CD4-positive, alpha-beta memory T cell (primary cell): ENCODE measurements at regions of chr2 and their contacts with region 1.

Region 1: GRCh38 chr2:177148477-177149154 is 64.0 kb upstream of the HNRNPA3 start:
- DNase-seq: peak; percentile 66 to 76 (median 71)
- H3K4me3 ChIP-seq: peak overlapping the region; percentile 53 to 73
- H3K4me3 Mint-ChIP-seq: peak overlapping the region; percentile 85 to 94 (median 90)
- H3K27ac ChIP-seq: peak overlapping the region; percentile 19
- H3K27ac Mint-ChIP-seq: peak overlapping the region in 6 of 7 donors; percentile 31 to 83 (median 58)
- H3K4me1 ChIP-seq: peaks cover 11% of the 10 kb centered on the region
- H3K4me1 Mint-ChIP-seq: peaks cover 6 to 12% (median 12%) of the 10 kb centered on the region in 4 donors
- H3K27me3 ChIP-seq: peaks cover 15% of the 10 kb centered on the region
- H3K27me3 Mint-ChIP-seq: peaks cover 14 to 19% of the 10 kb centered on the region in 2 donors

Region 2: GRCh38 chr2:176001916-176002687 is 1146.5 kb before region 1 on chr2 and contains the start of gene LNPK:
- CTCF ChIA-PET with region 1: no interaction called
- POLR2A ChIA-PET with region 1: no interaction called
- intact Hi-C with region 1: loop called (anchors 5 kb)
- DNase-seq: peak; percentile 88 to 95 (median 92)
- H3K4me3 ChIP-seq: peak within 1 kb of the TSS; percentile 76 to 77
- H3K4me3 Mint-ChIP-seq: peak within 1 kb of the TSS; percentile 81 to 94 (median 90)
- H3K27ac ChIP-seq: peak within 1 kb of the TSS; percentile 74
- H3K27ac Mint-ChIP-seq: peak within 1 kb of the TSS; percentile 61 to 98 (median 91)
- H3K4me1 ChIP-seq: peaks cover 16% of the 10 kb centered on the region
- H3K4me1 Mint-ChIP-seq: peaks cover 12 to 33% (median 17%) of the 10 kb centered on the region in 4 donors
- H3K27me3 ChIP-seq: no peaks in the 10 kb centered on the region
- H3K27me3 Mint-ChIP-seq: no peaks in the 10 kb centered on the region
- total RNA-seq, gene LNPK: 30.4 to 31.3 TPM

Region 3: GRCh38 chr2:176132205-176133171 is 1016.1 kb before region 1 on chr2:
- CTCF ChIA-PET with region 1: interaction called, 30 read pairs
- POLR2A ChIA-PET with region 1: no interaction called
- intact Hi-C with region 1: loop called (anchors 1 kb)
- DNase-seq: peak in 2 of 5 donors; percentile 34 to 38
- H3K4me3 ChIP-seq: peak overlapping the region; percentile 25 to 38
- H3K4me3 Mint-ChIP-seq: peak overlapping the region; percentile 78 to 89 (median 86)
- H3K27ac ChIP-seq: no peak overlapping the region
- H3K27ac Mint-ChIP-seq: peak overlapping the region in 3 of 7 donors; percentile 30 to 83 (median 52)
- H3K4me1 ChIP-seq: peaks cover 49% of the 10 kb centered on the region
- H3K4me1 Mint-ChIP-seq: peaks cover 21 to 58% (median 40%) of the 10 kb centered on the region in 4 donors
- H3K27me3 ChIP-seq: peaks cover 87% of the 10 kb centered on the region
- H3K27me3 Mint-ChIP-seq: peaks cover 64 to 72% of the 10 kb centered on the region in 2 donors

Region 4: DNA sequence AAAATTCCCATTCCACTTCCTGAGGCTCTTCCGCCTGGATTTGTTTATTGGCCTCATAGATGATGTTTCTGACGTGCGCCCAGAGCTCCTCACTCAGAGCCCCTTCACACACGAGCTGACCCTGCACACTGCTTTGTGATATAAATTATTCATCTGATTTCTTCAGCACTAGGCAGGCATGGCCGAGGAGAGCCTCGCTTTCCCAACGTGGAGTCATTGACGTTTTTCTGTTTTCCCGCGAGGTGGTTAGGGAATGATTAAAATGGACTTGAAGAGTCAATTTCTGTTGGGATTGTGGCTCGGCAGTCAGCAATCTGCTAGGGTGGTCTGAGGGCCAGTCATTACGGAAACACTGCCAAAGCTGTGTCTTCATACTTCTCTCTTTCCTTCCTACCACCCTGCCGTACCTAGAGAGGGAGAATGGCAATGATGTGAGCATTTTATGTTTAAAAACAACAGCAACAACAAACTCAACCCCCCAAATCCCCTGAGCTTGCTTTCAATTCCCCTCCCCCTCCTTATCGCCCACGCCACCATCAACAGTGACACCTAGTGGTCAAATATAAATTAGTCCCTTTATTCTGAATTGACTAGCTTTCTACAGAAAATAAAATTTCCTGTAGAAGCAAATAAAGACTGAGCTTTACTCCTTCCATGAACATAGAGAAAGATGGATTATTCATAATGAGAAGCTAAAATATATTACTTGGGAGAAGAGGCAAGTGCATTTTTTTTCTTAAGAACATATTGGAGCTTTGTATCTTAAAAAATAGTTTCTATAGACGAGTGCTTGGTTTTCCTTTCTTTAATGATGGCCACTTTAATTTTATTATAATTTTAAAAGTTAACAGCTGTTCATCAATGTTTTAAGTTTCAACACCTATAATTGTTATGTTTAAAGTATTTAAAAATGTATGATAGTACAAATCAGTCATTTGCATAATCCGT is 594.2 kb before region 1 on chr2:
- CTCF ChIA-PET with region 1: interaction called, 6 read pairs
- POLR2A ChIA-PET with region 1: no interaction called
- intact Hi-C with region 1: loop called (anchors 10 kb)
- DNase-seq: peak in 4 of 5 donors; percentile 42 to 48 (median 45)
- H3K4me3 ChIP-seq: peak overlapping the region; percentile 21 to 33
- H3K4me3 Mint-ChIP-seq: peak overlapping the region; percentile 82 to 94 (median 88)
- H3K27ac ChIP-seq: no peak overlapping the region
- H3K27ac Mint-ChIP-seq: no peak overlapping the region
- H3K4me1 ChIP-seq: peaks cover 10% of the 10 kb centered on the region
- H3K4me1 Mint-ChIP-seq: peaks cover 6 to 13% (median 10%) of the 10 kb centered on the region in 4 donors
- H3K27me3 ChIP-seq: peaks cover 3% of the 10 kb centered on the region
- H3K27me3 Mint-ChIP-seq: peaks cover 20 to 28% of the 10 kb centered on the region in 2 donors

Region 5: GRCh38 chr2:176653479-176654443 is 494.9 kb before region 1 on chr2:
- CTCF ChIA-PET with region 1: interaction called, 20 read pairs
- POLR2A ChIA-PET with region 1: no interaction called
- intact Hi-C with region 1: loop called (anchors 1 kb)
- DNase-seq: peak in 2 of 5 donors; percentile 6
- H3K4me3 ChIP-seq: no peak overlapping the region
- H3K4me3 Mint-ChIP-seq: no peak overlapping the region
- H3K27ac ChIP-seq: no peak overlapping the region
- H3K27ac Mint-ChIP-seq: no peak overlapping the region
- H3K4me1 ChIP-seq: no peaks in the 10 kb centered on the region
- H3K4me1 Mint-ChIP-seq: peaks cover 0 to 6% (median 5%) of the 10 kb centered on the region in 4 donors
- H3K27me3 ChIP-seq: no peaks in the 10 kb centered on the region
- H3K27me3 Mint-ChIP-seq: peaks cover 23 to 34% of the 10 kb centered on the region in 2 donors

Region 6: DNA sequence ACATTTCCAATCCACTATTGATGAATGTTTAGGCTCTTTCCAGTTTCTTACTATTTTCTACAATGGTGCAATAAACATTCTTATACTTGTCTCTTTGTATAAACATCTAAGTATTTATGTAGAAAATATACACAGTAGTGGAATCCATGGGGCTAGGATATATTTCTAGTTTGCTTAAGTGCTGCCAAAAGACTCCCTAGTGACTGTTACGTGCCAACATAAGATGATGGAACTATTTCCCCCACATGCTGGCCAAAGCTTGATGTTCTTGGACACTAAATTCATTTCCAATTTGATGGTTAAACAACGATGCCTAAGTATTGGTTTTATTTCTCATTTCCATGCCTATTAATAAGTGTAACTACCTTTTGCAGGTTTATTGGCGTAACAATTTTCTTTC is 314.4 kb before region 1 on chr2:
- CTCF ChIA-PET with region 1: no interaction called
- POLR2A ChIA-PET with region 1: no interaction called
- intact Hi-C with region 1: no loop called
- DNase-seq: no peak
- H3K4me3 ChIP-seq: no peak overlapping the region
- H3K4me3 Mint-ChIP-seq: no peak overlapping the region
- H3K27ac ChIP-seq: no peak overlapping the region
- H3K27ac Mint-ChIP-seq: no peak overlapping the region
- H3K4me1 ChIP-seq: no peaks in the 10 kb centered on the region
- H3K4me1 Mint-ChIP-seq: peaks cover 0 to 3% (median 0%) of the 10 kb centered on the region in 4 donors
- H3K27me3 ChIP-seq: no peaks in the 10 kb centered on the region
- H3K27me3 Mint-ChIP-seq: peaks cover 5 to 11% of the 10 kb centered on the region in 2 donors

Region 7: DNA sequence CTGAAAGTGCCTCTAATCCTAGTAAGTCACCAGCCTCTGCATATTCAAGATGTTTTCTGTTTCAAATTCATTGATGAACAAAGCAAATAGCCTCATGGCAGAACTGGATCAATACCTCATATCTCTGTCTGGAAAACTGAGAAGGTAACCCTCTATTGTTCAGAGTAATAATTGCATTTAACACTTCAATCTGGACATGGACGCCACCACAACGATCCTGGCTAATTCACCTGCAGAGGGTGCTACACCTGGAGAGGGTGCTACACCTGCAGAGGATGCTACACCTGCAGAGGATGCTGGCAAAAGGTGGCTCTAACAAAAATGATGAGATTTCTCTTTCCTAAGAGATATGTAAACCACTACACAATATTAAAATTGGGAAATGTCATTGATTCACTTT is 119.1 kb before region 1 on chr2:
- CTCF ChIA-PET with region 1: interaction called, 3 read pairs
- POLR2A ChIA-PET with region 1: no interaction called
- intact Hi-C with region 1: loop called (anchors 2 kb)
- DNase-seq: no peak
- H3K4me3 ChIP-seq: no peak overlapping the region
- H3K4me3 Mint-ChIP-seq: no peak overlapping the region
- H3K27ac ChIP-seq: no peak overlapping the region
- H3K27ac Mint-ChIP-seq: no peak overlapping the region
- H3K4me1 ChIP-seq: no peaks in the 10 kb centered on the region
- H3K4me1 Mint-ChIP-seq: no peaks in the 10 kb centered on the region
- H3K27me3 ChIP-seq: no peaks in the 10 kb centered on the region
- H3K27me3 Mint-ChIP-seq: peaks cover 7 to 13% of the 10 kb centered on the region in 2 donors

Region 8: DNA sequence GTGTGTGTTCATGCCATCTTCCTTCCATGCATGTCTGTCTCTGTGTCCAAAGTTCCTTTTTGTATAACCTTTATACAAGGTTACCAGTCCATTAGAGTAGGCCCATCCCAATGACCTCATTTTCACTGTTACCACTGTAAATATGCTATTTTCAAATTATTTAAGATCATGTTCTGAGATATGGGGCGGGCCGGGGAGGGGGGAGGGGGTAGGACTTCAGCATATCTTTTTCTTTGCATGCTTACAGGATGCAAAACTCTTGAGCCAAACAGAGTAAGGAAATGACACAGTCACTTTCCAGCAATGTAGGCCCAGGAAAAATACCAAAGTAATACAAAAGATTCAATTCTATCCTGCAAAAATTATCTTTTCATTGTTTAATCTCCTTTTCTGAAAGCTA is 60.1 kb before region 1 on chr2:
- CTCF ChIA-PET with region 1: no interaction called
- POLR2A ChIA-PET with region 1: no interaction called
- intact Hi-C with region 1: no loop called
- DNase-seq: no peak
- H3K4me3 ChIP-seq: no peak overlapping the region
- H3K4me3 Mint-ChIP-seq: no peak overlapping the region
- H3K27ac ChIP-seq: no peak overlapping the region
- H3K27ac Mint-ChIP-seq: no peak overlapping the region
- H3K4me1 ChIP-seq: no peaks in the 10 kb centered on the region
- H3K4me1 Mint-ChIP-seq: peaks cover 0 to 4% (median 0%) of the 10 kb centered on the region in 4 donors
- H3K27me3 ChIP-seq: peaks cover 3% of the 10 kb centered on the region
- H3K27me3 Mint-ChIP-seq: peaks cover 9 to 16% of the 10 kb centered on the region in 2 donors

Region 9: GRCh38 chr2:177114712-177115111 is 33.9 kb before region 1 on chr2:
- CTCF ChIA-PET with region 1: no interaction called
- POLR2A ChIA-PET with region 1: no interaction called
- intact Hi-C with region 1: no loop called
- DNase-seq: no peak
- H3K4me3 ChIP-seq: no peak overlapping the region
- H3K4me3 Mint-ChIP-seq: no peak overlapping the region
- H3K27ac ChIP-seq: no peak overlapping the region
- H3K27ac Mint-ChIP-seq: no peak overlapping the region
- H3K4me1 ChIP-seq: no peaks in the 10 kb centered on the region
- H3K4me1 Mint-ChIP-seq: no peaks in the 10 kb centered on the region
- H3K27me3 ChIP-seq: no peaks in the 10 kb centered on the region
- H3K27me3 Mint-ChIP-seq: peaks cover 6% of the 10 kb centered on the region in 2 donors

Region 10: DNA sequence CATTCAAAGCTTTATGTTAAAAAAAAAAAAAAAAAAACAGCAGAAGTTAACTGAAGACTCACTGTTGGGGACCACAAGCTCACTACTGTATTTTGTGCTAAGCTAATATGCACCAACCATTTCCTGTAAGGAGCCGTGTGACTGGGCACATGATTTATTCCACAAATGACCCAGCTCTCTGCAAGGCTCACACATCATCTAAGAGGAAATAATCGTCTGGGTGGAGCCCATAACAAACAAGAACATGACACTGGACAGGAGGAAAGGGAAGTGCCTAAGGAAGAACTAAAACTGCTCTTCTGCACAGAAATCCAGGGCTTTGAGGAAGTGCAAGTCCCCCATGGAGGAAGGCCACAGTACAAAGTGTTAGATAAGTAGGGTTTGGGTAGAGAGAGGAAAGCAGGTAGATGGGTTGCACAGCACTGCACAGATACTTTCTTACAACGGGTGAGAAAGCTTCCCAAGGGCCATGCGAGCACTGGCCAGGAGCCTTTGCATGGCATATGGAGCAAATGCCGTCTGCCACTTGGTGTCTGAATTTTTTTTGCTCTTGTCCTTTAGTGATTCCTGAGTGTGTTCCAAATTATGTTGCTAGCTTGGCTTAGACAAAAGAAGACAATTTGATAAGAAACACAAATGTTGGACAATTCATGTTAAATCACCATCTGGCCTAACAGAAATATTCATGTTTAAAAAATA is 91.5 kb after region 1 on chr2:
- CTCF ChIA-PET with region 1: no interaction called
- POLR2A ChIA-PET with region 1: no interaction called
- intact Hi-C with region 1: no loop called
- DNase-seq: peak; percentile 43 to 62 (median 49)
- H3K4me3 ChIP-seq: no peak overlapping the region
- H3K4me3 Mint-ChIP-seq: peak overlapping the region in 7 of 8 donors; percentile 13 to 78 (median 64)
- H3K27ac ChIP-seq: peak overlapping the region; percentile 22
- H3K27ac Mint-ChIP-seq: peak overlapping the region; percentile 44 to 96 (median 89)
- H3K4me1 ChIP-seq: peaks cover 85% of the 10 kb centered on the region
- H3K4me1 Mint-ChIP-seq: peaks cover 56 to 89% (median 72%) of the 10 kb centered on the region in 4 donors
- H3K27me3 ChIP-seq: no peaks in the 10 kb centered on the region
- H3K27me3 Mint-ChIP-seq: no peaks in the 10 kb centered on the region

Region 11: GRCh38 chr2:177419274-177419673 is 270.7 kb after region 1 on chr2:
- CTCF ChIA-PET with region 1: interaction called, 5 read pairs
- POLR2A ChIA-PET with region 1: no interaction called
- intact Hi-C with region 1: loop called (anchors 5 kb)
- DNase-seq: no peak
- H3K4me3 ChIP-seq: no peak overlapping the region
- H3K4me3 Mint-ChIP-seq: no peak overlapping the region
- H3K27ac ChIP-seq: no peak overlapping the region
- H3K27ac Mint-ChIP-seq: no peak overlapping the region
- H3K4me1 ChIP-seq: peaks cover 5% of the 10 kb centered on the region
- H3K4me1 Mint-ChIP-seq: peaks cover 8 to 20% (median 18%) of the 10 kb centered on the region in 4 donors
- H3K27me3 ChIP-seq: no peaks in the 10 kb centered on the region
- H3K27me3 Mint-ChIP-seq: no peaks in the 10 kb centered on the region